HepG2 (cell line): ENCODE measurements at regions of chr6 and their contacts with region 1.

Region 1: DNA sequence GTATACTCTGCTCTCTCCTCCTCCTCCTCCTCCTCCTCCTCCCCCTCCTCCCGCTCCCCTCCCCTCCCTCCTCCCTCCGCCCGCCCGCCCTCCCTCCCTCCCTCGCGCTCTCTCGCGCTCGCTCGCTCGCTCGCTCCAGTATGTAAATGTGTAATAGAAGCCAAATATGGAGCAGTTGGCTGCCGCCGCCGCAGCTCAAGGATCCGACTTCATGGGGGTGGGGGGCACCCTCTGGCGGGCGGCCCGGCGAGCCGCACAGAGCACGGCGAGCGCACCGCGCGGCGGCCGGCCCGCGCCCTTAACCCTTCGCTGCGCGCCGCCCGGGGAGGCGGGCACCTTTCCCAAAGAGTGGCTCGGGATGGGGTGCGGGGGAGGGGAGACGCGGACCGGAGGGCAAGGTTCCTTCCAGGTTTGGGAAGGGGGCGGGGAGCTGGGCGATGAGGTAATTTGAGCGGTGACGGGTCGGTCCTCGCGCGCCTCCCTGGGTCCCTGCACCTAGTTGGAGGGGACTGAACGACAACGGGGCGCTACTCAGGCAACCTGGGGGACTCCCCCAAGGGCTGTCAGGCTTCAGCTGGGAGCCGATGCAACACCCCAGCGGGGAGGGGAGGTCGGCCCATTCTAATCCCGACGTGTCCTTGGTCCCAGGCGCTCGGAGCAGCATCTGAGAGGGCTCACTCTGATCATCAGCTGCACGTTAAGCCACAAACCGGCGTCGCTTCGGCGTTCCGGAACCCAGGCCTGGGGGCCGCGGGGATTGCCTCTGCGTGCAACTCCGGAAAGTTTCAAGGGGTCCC is 409 bp upstream of the ATXN1 start:
- DNase-seq: peak; percentile 92
- ATAC-seq: peak; percentile 80
- H3K4me3 ChIP-seq: peak overlapping the region; percentile 92 to 98 (median 93)
- H3K27ac ChIP-seq: peak overlapping the region; percentile 87
- H3K4me1 ChIP-seq: peaks cover 45% of the 10 kb centered on the region
- H3K27me3 ChIP-seq: no peaks in the 10 kb centered on the region; a peak in 1 of 5 replicates
- CTCF ChIP-seq: peak; percentile 74
- EP300 ChIP-seq: peak; percentile 17 to 64; a peak in 3 of 4 replicates
- POLR2A ChIP-seq: peak in 1 of 2 experiments; percentile 60
- RAD21 ChIP-seq: peak; percentile 93

Region 2: GRCh38 chr6:16409531-16410441 is 351.9 kb before region 1 on chr6:
- CTCF ChIA-PET with region 1: no interaction called
- POLR2A ChIA-PET with region 1: no interaction called
- in situ Hi-C with region 1: no loop called
- intact Hi-C with region 1: loop called (anchors 10 kb)
- DNase-seq: peak; percentile 45
- ATAC-seq: peak; percentile 82
- H3K4me3 ChIP-seq: no peak overlapping the region
- H3K27ac ChIP-seq: no peak overlapping the region
- H3K4me1 ChIP-seq: no peaks in the 10 kb centered on the region; the same call in 1 of the 2 replicates
- H3K27me3 ChIP-seq: no peaks in the 10 kb centered on the region
- CTCF ChIP-seq: peak; percentile 73
- EP300 ChIP-seq: no peak
- POLR2A ChIP-seq: no peak
- RAD21 ChIP-seq: no peak

Region 3: GRCh38 chr6:16585805-16586204 is 175.9 kb before region 1 on chr6:
- CTCF ChIA-PET with region 1: no interaction called
- POLR2A ChIA-PET with region 1: interaction called, 3 read pairs
- in situ Hi-C with region 1: loop called (anchors 5 kb)
- intact Hi-C with region 1: loop called (anchors 1 kb)
- DNase-seq: no peak
- ATAC-seq: peak; percentile 57
- H3K4me3 ChIP-seq: peak overlapping the region in 1 of 3 experiments; percentile 5; a peak in 1 of 6 replicates
- H3K27ac ChIP-seq: peak overlapping the region; percentile 68
- H3K4me1 ChIP-seq: peaks cover 36% of the 10 kb centered on the region
- H3K27me3 ChIP-seq: no peaks in the 10 kb centered on the region
- CTCF ChIP-seq: no peak
- EP300 ChIP-seq: no peak
- POLR2A ChIP-seq: no peak
- RAD21 ChIP-seq: no peak

Region 4: DNA sequence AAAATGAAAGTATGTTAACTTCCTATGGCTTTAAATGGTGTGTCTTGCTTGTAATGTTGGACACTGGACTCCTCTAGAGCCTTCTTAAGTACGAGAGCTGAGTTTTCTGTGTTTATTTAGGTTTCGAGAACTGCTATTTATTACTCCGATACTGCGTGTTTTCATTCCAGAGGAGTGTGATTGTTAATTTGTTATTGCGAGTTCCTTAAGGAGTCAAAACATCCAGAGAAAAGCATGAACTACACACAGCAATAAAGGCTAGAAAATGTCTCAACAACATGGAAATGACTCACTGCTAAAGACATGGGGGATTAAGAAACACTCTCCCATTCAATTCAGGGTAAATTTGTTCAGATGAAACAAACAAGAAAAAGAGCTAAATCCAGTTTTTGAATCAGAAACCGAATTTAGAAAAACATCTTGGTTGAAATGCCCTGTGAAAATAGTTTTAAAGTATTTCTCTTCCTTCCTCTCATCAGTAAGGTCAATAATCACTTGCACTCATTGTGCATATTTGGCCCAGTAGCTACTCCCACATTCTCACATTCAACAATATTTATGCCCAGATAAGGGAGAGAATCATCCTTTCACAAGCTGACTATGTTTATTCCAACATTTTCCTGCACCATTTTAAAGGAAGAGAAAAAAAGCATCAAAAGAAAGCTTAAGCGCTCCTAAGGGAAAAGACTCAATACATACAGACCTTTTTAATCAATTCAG is 36.4 kb before region 1 on chr6:
- CTCF ChIA-PET with region 1: no interaction called
- POLR2A ChIA-PET with region 1: interaction called, 17 read pairs
- in situ Hi-C with region 1: no loop called
- intact Hi-C with region 1: loop called (anchors 1 kb)
- DNase-seq: no peak
- ATAC-seq: no peak
- H3K4me3 ChIP-seq: no peak overlapping the region
- H3K27ac ChIP-seq: peak overlapping the region; percentile 32
- H3K4me1 ChIP-seq: peaks cover 87% of the 10 kb centered on the region
- H3K27me3 ChIP-seq: no peaks in the 10 kb centered on the region
- CTCF ChIP-seq: no peak
- EP300 ChIP-seq: no peak
- POLR2A ChIP-seq: no peak
- RAD21 ChIP-seq: no peak

Region 5: GRCh38 chr6:16819752-16820151 is 58.1 kb after region 1 on chr6:
- CTCF ChIA-PET with region 1: no interaction called
- POLR2A ChIA-PET with region 1: interaction called, 3 read pairs
- in situ Hi-C with region 1: no loop called
- intact Hi-C with region 1: loop called (anchors 5 kb)
- DNase-seq: no peak
- ATAC-seq: no peak
- H3K4me3 ChIP-seq: no peak overlapping the region
- H3K27ac ChIP-seq: no peak overlapping the region
- H3K4me1 ChIP-seq: peaks cover 51% of the 10 kb centered on the region
- H3K27me3 ChIP-seq: no peaks in the 10 kb centered on the region
- CTCF ChIP-seq: peak; percentile 36
- EP300 ChIP-seq: no peak
- POLR2A ChIP-seq: no peak
- RAD21 ChIP-seq: no peak

Region 6: DNA sequence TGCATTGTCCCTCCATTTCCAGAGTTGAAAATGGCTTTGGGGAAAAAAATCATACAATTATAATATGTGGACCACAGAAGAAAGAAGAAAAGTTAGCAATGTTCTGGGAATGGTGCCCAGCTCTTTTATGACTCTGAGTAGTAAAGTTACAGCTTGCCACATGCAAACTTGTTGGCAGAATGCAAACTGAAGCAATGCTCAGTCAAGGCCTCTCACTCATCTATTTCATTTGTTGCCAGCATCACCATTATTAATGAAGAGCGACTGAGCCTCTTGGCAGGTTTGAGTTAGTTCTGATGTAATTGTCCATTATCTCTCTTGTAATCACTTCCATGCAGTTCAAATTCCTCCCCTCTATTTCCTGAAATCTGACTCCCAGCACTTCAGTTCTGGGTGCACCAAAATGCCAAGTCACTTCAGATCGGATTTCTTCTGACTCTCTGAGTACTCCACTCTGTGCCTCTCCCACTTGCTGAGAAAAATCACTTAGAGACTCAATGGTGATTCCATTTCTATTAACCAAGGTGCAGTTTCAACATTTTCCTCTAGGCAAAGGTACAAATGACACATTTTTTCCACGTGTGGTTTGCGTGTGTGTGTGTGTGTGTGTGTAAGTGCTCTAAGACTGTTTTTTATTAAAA is 185.8 kb after region 1 on chr6:
- CTCF ChIA-PET with region 1: no interaction called
- POLR2A ChIA-PET with region 1: no interaction called
- in situ Hi-C with region 1: no loop called
- intact Hi-C with region 1: no loop called
- DNase-seq: peak; percentile 17
- ATAC-seq: no peak
- H3K4me3 ChIP-seq: no peak overlapping the region
- H3K27ac ChIP-seq: no peak overlapping the region
- H3K4me1 ChIP-seq: no peaks in the 10 kb centered on the region
- H3K27me3 ChIP-seq: 0 out of 5 replicates have a peak, but pooled peaks cover 0 to 4% of the 10 kb centered on the region in 2 experiments
- CTCF ChIP-seq: no peak
- EP300 ChIP-seq: no peak
- POLR2A ChIP-seq: no peak
- RAD21 ChIP-seq: no peak